GM12878 (cell line): ENCODE measurements at regions of chr12 and their contacts with region 1.

Region 1: GRCh38 chr12:22443379-22444316 is 100.7 kb downstream of the C2CD5 start:
- DNase-seq: peak; percentile 15
- ATAC-seq: peak; percentile 100
- H3K4me3 ChIP-seq: no peak overlapping the region
- H3K27ac ChIP-seq: no peak overlapping the region
- H3K4me1 ChIP-seq: no peaks in the 10 kb centered on the region
- H3K27me3 ChIP-seq: no peaks in the 10 kb centered on the region
- CTCF ChIP-seq: peak; percentile 75 to 94 (median 80)
- EP300 ChIP-seq: no peak
- POLR2A ChIP-seq: no peak
- RAD21 ChIP-seq: peak; percentile 98

Region 2: DNA sequence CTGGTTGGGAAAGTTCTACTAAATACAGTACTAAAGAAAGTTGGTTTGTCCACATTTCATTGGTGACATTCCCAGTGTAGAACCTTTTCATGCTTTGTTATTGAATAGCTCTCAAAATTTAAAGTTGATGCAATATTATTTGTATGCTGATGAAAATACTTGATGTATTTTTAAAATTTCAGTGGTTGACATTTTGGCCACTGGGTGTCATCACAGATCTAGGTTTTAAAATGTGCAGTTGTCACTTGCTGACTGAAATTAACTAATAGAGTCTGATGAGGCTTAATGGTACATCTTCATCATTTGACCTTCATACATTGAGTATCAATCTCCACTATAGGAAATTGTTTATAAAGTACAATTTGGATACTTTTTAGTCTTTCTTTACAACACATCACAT is 360.5 kb before region 1 on chr12:
- CTCF ChIA-PET with region 1: interaction called, 9 read pairs
- POLR2A ChIA-PET with region 1: no interaction called
- RAD21 ChIA-PET with region 1: interaction called, 3 read pairs
- SMC1A ChIA-PET with region 1: interaction called, 4 read pairs
- in situ Hi-C with region 1: no loop called
- intact Hi-C with region 1: loop called (anchors 1 kb)
- DNase-seq: no peak
- ATAC-seq: peak; percentile 55
- H3K4me3 ChIP-seq: no peak overlapping the region
- H3K27ac ChIP-seq: no peak overlapping the region
- H3K4me1 ChIP-seq: no peaks in the 10 kb centered on the region
- H3K27me3 ChIP-seq: no peaks in the 10 kb centered on the region
- CTCF ChIP-seq: peak; percentile 16 to 50 (median 27); a peak in 3 of 6 replicates
- EP300 ChIP-seq: no peak
- POLR2A ChIP-seq: no peak
- RAD21 ChIP-seq: peak; percentile 66

Region 3: GRCh38 chr12:22121227-22121626 is 322.4 kb before region 1 on chr12:
- CTCF ChIA-PET with region 1: interaction called, 12 read pairs
- POLR2A ChIA-PET with region 1: no interaction called
- RAD21 ChIA-PET with region 1: interaction called, 7 read pairs
- SMC1A ChIA-PET with region 1: interaction called, 6 read pairs
- in situ Hi-C with region 1: no loop called
- intact Hi-C with region 1: no loop called
- DNase-seq: no peak
- ATAC-seq: peak; percentile 88
- H3K4me3 ChIP-seq: no peak overlapping the region
- H3K27ac ChIP-seq: no peak overlapping the region
- H3K4me1 ChIP-seq: no peaks in the 10 kb centered on the region
- H3K27me3 ChIP-seq: no peaks in the 10 kb centered on the region
- CTCF ChIP-seq: peak; percentile 37 to 61 (median 46)
- EP300 ChIP-seq: no peak
- POLR2A ChIP-seq: no peak
- RAD21 ChIP-seq: peak; percentile 37; the same call in 1 of the 2 replicates

Region 4: DNA sequence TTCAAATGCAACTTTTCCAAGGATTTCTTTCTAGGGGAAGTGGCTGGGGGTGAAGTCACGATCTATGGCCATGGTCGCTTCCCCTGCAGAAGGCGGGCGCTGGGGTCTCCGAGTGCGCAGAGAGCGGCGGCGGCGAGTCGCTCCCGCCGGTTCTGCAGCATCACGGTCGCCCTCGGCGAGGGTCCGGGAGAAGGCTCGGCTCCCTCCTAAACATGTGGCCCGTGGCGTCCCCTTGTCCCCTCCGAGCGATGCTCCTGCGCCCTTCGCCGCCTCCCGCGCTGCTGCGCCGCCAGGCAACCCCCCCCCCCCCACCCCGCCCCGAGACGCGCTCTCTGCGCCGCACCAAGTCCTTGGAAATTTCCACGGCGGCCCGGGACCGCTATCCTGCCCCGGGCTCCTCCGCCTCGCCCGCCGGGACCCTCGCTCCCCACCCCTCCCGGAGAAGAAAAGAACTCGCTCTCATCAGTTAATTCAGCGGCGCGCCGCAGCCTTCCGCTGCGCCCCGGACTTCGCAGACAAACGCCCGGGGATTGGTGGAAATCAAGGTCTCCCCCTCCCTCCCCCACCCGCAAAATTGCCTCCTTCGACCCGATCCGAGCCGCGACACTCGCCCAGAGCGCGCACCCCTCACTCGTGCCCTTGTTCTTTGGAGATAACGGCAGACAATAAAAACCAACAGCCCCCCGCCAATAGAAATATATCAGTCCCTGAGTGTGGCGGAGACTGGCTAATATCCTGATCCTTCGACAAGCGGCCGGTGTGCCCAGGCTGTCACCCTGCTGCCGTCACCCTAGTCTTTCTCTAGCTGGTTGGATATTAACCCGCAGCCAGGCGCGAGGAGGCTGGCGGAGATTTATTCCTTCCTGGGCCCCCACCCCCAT is 109.0 kb before region 1 on chr12 and contains the start of gene ST8SIA1:
- CTCF ChIA-PET with region 1: interaction called, 4 read pairs
- POLR2A ChIA-PET with region 1: no interaction called
- RAD21 ChIA-PET with region 1: interaction called, 5 read pairs
- SMC1A ChIA-PET with region 1: no interaction called
- in situ Hi-C with region 1: no loop called
- intact Hi-C with region 1: loop called (anchors 1 kb)
- DNase-seq: no peak
- ATAC-seq: peak; percentile 45
- H3K4me3 ChIP-seq: peak within 1 kb of the TSS; percentile 41; the same call in 1 of the 2 replicates
- H3K27ac ChIP-seq: no peak within 1 kb of the TSS
- H3K4me1 ChIP-seq: no peaks in the 10 kb centered on the region; the same call in 1 of the 2 replicates
- H3K27me3 ChIP-seq: peaks cover 3 to 22% of the 10 kb centered on the region in 2 experiments
- CTCF ChIP-seq: no peak
- EP300 ChIP-seq: no peak
- POLR2A ChIP-seq: no peak
- RAD21 ChIP-seq: no peak
- polyA plus RNA-seq, gene ST8SIA1: not detected

Region 5: DNA sequence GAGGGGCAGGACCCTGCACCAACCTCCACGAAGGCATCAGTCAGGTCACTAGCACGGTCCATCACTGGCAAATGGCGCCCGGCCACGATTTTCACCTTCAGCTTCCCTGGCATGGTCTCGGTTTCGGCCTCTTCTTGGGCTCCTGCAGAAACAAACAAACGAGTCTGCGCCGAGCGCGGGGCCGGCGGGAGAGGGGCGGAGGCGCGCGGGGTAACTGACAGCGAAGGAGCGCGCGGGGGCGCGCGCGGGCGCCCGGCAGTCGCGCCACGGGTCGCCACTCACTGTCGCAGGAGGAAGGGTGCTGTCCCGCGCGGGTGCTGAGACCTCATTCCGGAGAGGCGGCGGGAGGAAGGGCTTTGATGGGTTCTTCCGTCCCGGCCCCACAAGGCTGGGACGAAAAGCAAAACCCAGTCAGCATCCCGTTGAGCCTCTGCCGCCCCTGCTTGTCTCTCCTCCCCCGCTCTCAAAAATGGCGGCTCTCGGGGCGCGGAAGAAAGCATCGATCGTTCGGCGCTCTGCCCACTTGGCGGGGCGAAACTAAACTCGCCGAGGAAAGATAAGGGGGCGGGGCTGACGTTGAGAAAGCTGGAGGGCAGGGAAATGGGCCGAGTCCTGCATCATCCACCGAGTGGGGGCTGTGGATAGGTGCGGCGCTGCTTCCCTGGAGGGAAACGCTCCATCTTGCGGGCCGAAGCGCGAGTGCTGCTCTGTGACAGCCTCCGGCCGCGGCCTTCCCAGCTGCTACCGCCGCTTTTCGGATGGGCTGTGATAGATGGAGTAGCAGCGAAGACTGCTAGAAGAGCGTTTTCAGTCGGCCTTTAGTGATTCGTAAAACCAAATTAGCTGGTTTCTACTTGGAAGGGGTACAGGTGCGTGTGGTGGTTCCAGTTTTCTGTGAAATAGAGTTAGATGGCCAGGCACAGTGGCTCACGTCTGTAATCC is 100.7 kb after region 1 on chr12 and contains the start of gene C2CD5:
- CTCF ChIA-PET with region 1: no interaction called
- POLR2A ChIA-PET with region 1: no interaction called
- RAD21 ChIA-PET with region 1: no interaction called
- SMC1A ChIA-PET with region 1: no interaction called
- in situ Hi-C with region 1: no loop called
- intact Hi-C with region 1: no loop called
- DNase-seq: peak; percentile 80
- ATAC-seq: peak; percentile 85
- H3K4me3 ChIP-seq: peak within 1 kb of the TSS; percentile 69
- H3K27ac ChIP-seq: peak within 1 kb of the TSS; percentile 84
- H3K4me1 ChIP-seq: peaks cover 7% of the 10 kb centered on the region
- H3K27me3 ChIP-seq: no peaks in the 10 kb centered on the region
- CTCF ChIP-seq: peak; percentile 24 to 34 (median 33); a peak in 4 of 6 replicates
- EP300 ChIP-seq: 0 out of 4 replicates have a peak, but pooled peaks of 1 of the 2 experiments have one; percentile 17
- POLR2A ChIP-seq: peak; percentile 94
- RAD21 ChIP-seq: no peak
- polyA plus RNA-seq, gene C2CD5: 7.7 to 10.1 TPM